ENCODE measurements at regions of chr4 and their contacts with region 1.

Region 1: GRCh38 chr4:28287837-28288236 is 1427.2 kb downstream of the STIM2 start:
- DNase-seq: peak; percentile 63 to 78
- H3K4me3 ChIP-seq: no peak overlapping the region
- H3K27ac ChIP-seq: no peak overlapping the region
- H3K4me1 ChIP-seq: peaks cover 14% of the 10 kb centered on the region
- H3K27me3 ChIP-seq: no peaks in the 10 kb centered on the region
- CTCF ChIP-seq: no peak

Region 2: DNA sequence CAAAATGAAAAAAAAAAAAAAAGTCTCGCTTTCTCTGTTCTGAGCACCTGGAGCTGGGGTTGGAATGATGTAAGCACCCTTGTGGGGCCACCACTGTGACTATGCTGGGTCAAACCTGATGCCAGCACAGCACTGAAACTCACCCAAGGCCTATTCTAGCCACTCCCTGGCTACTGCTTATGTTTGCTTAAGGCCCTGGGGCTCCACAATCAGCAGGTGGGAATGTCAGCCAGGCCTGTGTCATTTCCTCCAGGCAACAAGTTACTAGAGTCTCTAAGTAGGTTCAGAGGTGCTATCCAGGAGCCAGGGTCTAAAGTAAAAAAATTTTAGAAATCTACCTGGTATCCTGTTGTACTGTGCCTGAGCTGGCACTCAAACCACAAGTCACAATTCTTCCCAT is 120.4 kb before region 1 on chr4:
- CTCF ChIA-PET with region 1: no interaction called
- POLR2A ChIA-PET with region 1: no interaction called
- intact Hi-C with region 1: loop called (anchors 1 kb)
- DNase-seq: peak; percentile 86 to 97
- H3K4me3 ChIP-seq: peak overlapping the region; percentile 24; the same call in 1 of the 2 replicates
- H3K27ac ChIP-seq: peak overlapping the region; percentile 88
- H3K4me1 ChIP-seq: peaks cover 29% of the 10 kb centered on the region
- H3K27me3 ChIP-seq: no peaks in the 10 kb centered on the region
- CTCF ChIP-seq: no peak

Region 3: DNA sequence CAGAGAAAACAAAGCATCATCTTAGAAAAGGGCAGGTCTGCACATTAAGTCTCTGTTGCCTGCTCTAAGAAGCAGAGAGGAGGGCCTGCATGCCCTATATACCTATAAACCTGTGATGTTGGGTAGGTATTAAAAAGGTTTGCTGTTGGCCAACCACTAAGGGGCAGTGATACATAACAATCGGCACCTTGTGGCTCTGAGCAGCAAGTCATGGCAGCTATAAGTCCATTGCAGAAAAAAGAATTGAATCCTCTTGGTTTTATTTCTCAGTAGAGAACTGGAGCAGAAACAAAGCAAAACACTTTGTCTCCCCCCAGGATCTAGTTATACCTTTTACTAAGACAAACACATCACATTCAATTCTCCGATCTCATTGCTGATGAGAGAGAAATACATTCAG is 62.8 kb before region 1 on chr4:
- CTCF ChIA-PET with region 1: no interaction called
- POLR2A ChIA-PET with region 1: no interaction called
- intact Hi-C with region 1: loop called (anchors 5 kb)
- DNase-seq: peak in 1 of 2 experiments; percentile 18
- H3K4me3 ChIP-seq: no peak overlapping the region
- H3K27ac ChIP-seq: no peak overlapping the region
- H3K4me1 ChIP-seq: peaks cover 9% of the 10 kb centered on the region; the same call in 1 of the 2 replicates
- H3K27me3 ChIP-seq: no peaks in the 10 kb centered on the region
- CTCF ChIP-seq: peak; percentile 54

Region 4: DNA sequence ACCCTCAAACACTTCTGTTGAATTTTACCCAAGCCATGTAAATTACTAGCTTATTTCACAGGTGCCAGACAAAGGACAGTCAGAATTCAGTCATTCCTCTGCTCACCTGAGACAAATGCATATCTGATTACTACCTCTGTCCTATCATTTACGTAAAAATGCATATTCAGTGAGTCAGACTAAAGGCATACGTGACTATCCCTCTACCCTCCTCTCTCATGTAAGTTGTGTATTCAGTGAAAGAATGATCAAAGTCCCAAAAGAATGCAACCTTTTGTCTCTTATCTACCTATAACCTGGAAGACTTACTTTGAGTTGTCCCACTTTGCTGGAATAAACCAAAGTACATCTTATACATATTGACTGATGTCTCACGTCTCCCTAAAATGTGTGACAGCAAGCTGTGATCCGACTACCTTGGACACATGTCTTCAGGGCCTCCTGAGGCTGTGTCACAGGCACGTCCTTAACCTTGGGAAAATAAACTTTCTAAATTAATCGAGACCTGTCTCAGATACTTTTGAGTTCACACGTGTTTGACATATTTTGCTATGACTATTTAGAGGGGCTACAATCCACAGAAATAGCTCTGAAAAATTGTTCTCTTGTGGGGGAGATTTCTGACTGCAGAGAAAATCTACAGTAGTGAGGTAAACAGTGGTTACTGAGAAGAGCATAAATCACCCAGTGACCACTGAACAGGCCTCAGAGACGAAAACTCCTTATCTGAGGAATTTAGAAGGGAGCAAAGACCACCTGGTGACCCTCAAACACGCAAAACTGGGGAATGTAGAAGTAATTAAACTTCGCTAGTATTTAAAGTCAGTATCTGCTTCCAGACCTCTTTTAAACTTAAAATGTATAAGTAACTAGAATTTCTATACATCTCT is 148.6 kb after region 1 on chr4:
- CTCF ChIA-PET with region 1: no interaction called
- POLR2A ChIA-PET with region 1: no interaction called
- intact Hi-C with region 1: loop called (anchors 1 kb)
- DNase-seq: peak in 1 of 2 experiments; percentile 65
- H3K4me3 ChIP-seq: no peak overlapping the region
- H3K27ac ChIP-seq: no peak overlapping the region
- H3K4me1 ChIP-seq: peaks cover 5% of the 10 kb centered on the region; the same call in 1 of the 2 replicates
- H3K27me3 ChIP-seq: no peaks in the 10 kb centered on the region
- CTCF ChIP-seq: no peak